Endothelial cell of umbilical vein (primary cell): ENCODE measurements at regions of chr2 and their contacts with region 1.

Region 1: DNA sequence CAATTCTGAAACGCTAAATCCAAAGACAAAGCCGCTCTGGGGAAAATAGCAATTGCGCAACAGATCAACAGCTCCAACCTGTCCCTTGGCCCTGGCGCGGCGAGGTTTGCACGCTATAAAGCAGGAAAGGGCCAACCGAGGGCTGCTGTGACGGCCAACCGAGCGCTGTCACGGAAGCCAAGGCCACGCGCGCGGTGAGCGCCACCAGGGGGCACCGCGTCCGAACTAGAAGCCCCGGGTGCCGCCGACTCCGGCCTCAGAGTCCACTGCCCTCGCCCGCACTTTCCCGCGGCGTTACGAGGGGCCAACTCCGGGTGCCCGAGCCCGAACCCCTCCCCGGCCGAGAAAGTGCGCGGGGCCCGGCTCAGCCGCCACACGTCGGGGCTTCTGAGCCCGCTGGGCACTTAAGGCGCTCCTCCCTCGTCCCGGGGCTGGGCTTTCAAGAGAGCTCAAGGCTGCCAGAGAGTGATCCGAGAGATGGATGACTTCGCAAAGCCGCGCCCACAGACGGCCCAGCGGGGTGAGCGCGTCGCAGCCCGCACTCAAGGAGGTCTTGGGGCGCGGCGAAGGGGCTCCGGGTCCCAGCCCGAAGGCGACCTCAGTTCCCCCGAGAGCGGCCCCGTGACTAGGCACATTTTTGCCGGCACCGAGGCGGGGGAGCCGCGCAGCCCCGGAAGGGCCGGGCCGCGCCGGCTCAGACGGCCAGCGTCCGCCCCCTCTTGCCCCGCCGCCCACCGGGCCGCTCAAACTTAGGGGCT is 897 bp downstream of the NFE2L2 start:
- DNase-seq: peak; percentile 97
- H3K4me3 ChIP-seq: peak overlapping the region; percentile 79 to 98 (median 90)
- H3K27ac ChIP-seq: peak overlapping the region; percentile 94
- H3K4me1 ChIP-seq: peaks cover 27% of the 10 kb centered on the region
- H3K27me3 ChIP-seq: no peaks in the 10 kb centered on the region
- CTCF ChIP-seq: peak; percentile 91 to 98
- POLR2A ChIP-seq: peak; percentile 84

Region 2: GRCh38 chr2:176126929-176127773 is 1136.5 kb before region 1 on chr2:
- CTCF ChIA-PET with region 1: no interaction called
- POLR2A ChIA-PET with region 1: interaction called, 3 read pairs
- dilution Hi-C with region 1: no loop called
- intact Hi-C with region 1: loop called (anchors 1 kb)
- DNase-seq: peak; percentile 68
- H3K4me3 ChIP-seq: peak overlapping the region in 2 of 3 experiments; percentile 48 to 67
- H3K27ac ChIP-seq: no peak overlapping the region
- H3K4me1 ChIP-seq: peaks cover 33% of the 10 kb centered on the region
- H3K27me3 ChIP-seq: peaks cover 5 to 6% of the 10 kb centered on the region in 2 experiments
- CTCF ChIP-seq: peak; percentile 61 to 66
- POLR2A ChIP-seq: no peak

Region 3: DNA sequence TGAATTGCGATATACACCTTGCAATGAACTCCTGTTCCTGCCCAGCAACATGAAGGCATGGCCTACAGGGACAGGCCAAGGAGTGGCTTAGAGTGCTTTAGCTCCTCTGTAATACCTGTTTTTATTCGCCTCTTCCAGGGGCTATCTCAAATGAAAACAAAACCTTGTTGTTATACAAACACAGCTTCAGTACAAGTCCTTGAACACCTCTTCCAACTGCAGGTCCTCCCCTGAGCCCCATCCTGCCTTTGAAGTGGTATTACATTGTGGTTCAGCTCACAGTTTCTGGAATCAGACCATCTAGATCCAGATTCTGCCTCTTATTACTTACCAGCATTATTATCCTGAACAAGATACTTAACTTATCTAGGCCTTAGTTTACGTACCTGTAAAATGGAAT is 134.0 kb before region 1 on chr2:
- CTCF ChIA-PET with region 1: no interaction called
- POLR2A ChIA-PET with region 1: no interaction called
- dilution Hi-C with region 1: no loop called
- intact Hi-C with region 1: no loop called
- DNase-seq: no peak
- H3K4me3 ChIP-seq: no peak overlapping the region
- H3K27ac ChIP-seq: no peak overlapping the region
- H3K4me1 ChIP-seq: no peaks in the 10 kb centered on the region
- H3K27me3 ChIP-seq: peaks cover 0 to 3% of the 10 kb centered on the region in 2 experiments
- CTCF ChIP-seq: no peak
- POLR2A ChIP-seq: no peak

Region 4: DNA sequence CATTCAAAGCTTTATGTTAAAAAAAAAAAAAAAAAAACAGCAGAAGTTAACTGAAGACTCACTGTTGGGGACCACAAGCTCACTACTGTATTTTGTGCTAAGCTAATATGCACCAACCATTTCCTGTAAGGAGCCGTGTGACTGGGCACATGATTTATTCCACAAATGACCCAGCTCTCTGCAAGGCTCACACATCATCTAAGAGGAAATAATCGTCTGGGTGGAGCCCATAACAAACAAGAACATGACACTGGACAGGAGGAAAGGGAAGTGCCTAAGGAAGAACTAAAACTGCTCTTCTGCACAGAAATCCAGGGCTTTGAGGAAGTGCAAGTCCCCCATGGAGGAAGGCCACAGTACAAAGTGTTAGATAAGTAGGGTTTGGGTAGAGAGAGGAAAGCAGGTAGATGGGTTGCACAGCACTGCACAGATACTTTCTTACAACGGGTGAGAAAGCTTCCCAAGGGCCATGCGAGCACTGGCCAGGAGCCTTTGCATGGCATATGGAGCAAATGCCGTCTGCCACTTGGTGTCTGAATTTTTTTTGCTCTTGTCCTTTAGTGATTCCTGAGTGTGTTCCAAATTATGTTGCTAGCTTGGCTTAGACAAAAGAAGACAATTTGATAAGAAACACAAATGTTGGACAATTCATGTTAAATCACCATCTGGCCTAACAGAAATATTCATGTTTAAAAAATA is 23.5 kb before region 1 on chr2:
- CTCF ChIA-PET with region 1: interaction called, 41 read pairs
- POLR2A ChIA-PET with region 1: interaction called, 5 read pairs
- dilution Hi-C with region 1: no loop called
- intact Hi-C with region 1: loop called (anchors 1 kb)
- DNase-seq: peak; percentile 75
- H3K4me3 ChIP-seq: peak overlapping the region in 1 of 3 experiments; percentile 0
- H3K27ac ChIP-seq: peak overlapping the region; percentile 99
- H3K4me1 ChIP-seq: peaks cover 56% of the 10 kb centered on the region
- H3K27me3 ChIP-seq: no peaks in the 10 kb centered on the region
- CTCF ChIP-seq: no peak
- POLR2A ChIP-seq: no peak

Region 5: DNA sequence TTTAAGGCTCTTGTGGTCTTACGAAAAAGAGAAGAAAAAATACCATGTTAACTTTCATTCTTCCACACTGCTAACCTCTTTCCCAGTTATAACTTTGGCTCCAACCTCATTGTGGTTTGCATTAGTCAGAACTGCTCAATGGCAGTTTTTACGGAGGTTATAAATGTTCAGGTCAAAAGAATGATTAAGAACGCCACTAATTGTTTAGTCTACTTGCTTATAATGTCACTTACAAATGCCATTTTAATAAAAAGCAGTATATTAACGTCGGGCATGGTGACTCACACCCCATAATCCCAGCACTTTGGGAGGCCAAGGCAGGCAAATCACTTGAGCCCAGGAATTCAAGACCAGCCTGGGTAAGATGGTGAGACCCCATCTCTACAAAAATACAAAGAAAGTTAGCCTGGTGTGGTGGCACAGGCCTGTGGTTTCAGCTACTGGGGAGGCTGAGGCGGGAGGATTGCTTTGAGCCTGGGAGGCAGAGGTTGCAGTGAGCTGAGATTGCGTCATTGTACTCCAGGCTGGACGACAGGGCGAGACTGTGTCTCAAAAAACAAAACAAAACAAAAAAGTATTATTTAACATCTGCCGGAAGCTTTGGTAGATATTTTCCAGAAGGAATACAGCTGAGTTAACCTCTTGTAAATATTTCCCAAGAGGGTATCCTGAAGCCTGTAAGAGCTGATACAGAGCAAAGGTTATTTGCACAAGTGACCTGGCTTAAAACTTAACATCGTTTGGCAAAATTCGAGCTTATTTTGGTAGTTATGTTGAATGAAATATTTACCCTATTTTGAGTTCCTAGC is 134.1 kb after region 1 on chr2:
- CTCF ChIA-PET with region 1: interaction called, 7 read pairs
- POLR2A ChIA-PET with region 1: no interaction called
- dilution Hi-C with region 1: no loop called
- intact Hi-C with region 1: loop called (anchors 2 kb)
- DNase-seq: peak; percentile 65
- H3K4me3 ChIP-seq: no peak overlapping the region
- H3K27ac ChIP-seq: peak overlapping the region; percentile 82
- H3K4me1 ChIP-seq: peaks cover 76% of the 10 kb centered on the region
- H3K27me3 ChIP-seq: no peaks in the 10 kb centered on the region
- CTCF ChIP-seq: no peak
- POLR2A ChIP-seq: no peak

Region 6: DNA sequence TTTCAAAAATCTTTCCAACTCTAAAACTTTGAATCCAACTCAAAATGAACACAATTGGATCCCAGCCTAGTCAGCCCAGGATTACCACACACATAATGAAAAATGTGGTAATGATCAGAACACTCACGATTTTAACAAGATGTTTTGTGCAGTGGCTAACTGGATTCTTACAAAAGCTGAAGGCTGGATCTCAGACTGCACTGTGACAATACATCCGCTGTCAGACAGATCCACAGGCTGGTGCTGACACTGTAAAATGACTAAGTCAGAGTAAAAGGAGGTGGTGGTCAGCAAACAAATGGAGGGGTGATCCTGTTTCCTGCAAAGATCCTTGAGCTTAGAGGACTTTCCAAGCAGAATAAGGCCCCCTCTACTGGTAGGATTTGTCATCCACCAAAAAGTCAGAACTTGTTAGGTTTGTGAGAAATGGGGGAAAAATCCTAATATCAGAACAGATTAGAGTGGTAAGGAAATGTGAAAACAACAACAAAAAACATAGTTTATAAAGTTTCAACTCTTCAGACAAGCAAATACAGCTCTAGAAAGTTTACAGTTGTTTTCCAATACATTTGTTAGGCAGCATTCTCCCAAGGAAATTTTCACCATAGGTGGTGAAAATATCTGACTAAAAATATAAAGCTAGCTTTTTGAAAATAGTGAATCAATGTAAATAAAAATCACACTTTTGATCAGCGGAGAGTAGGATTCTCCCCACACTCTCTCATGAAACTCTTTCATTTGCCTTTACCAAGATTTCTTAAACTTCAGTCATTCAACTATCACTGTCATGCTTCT is 340.8 kb after region 1 on chr2:
- CTCF ChIA-PET with region 1: interaction called, 4 read pairs
- POLR2A ChIA-PET with region 1: no interaction called
- dilution Hi-C with region 1: no loop called
- intact Hi-C with region 1: loop called (anchors 5 kb)
- DNase-seq: peak; percentile 71
- H3K4me3 ChIP-seq: no peak overlapping the region
- H3K27ac ChIP-seq: no peak overlapping the region
- H3K4me1 ChIP-seq: no peaks in the 10 kb centered on the region
- H3K27me3 ChIP-seq: no peaks in the 10 kb centered on the region
- CTCF ChIP-seq: peak; percentile 56 to 70
- POLR2A ChIP-seq: no peak

Region 7: GRCh38 chr2:177763532-177764265 is 500.1 kb after region 1 on chr2:
- CTCF ChIA-PET with region 1: interaction called, 20 read pairs
- POLR2A ChIA-PET with region 1: no interaction called
- dilution Hi-C with region 1: no loop called
- intact Hi-C with region 1: loop called (anchors 1 kb)
- DNase-seq: peak; percentile 70
- H3K4me3 ChIP-seq: no peak overlapping the region
- H3K27ac ChIP-seq: no peak overlapping the region
- H3K4me1 ChIP-seq: peaks cover under 1% of the 10 kb centered on the region
- H3K27me3 ChIP-seq: no peaks in the 10 kb centered on the region
- CTCF ChIP-seq: peak; percentile 82 to 90
- POLR2A ChIP-seq: no peak